ENCODE measurements at regions of chr3 and their contacts with region 1.

Region 1: GRCh38 chr3:32570421-32571191 is at the start of gene DYNC1LI1:
- DNase-seq: peak; percentile 81 to 96 (median 88)
- ATAC-seq: peak; percentile 98
- H3K4me3 ChIP-seq: peak within 1 kb of the TSS; percentile 68
- H3K4me3 Mint-ChIP-seq: peak within 1 kb of the TSS; percentile 84 to 96 (median 92)
- H3K27ac ChIP-seq: peak within 1 kb of the TSS; percentile 90
- H3K27ac Mint-ChIP-seq: peak within 1 kb of the TSS; percentile 71 to 93 (median 86)
- H3K4me1 ChIP-seq: peaks cover 5 to 17% of the 10 kb centered on the region in 2 donors
- H3K4me1 Mint-ChIP-seq: peaks cover 0 to 39% (median 31%) of the 10 kb centered on the region in 7 donors
- H3K27me3 ChIP-seq: no peaks in the 10 kb centered on the region
- H3K27me3 Mint-ChIP-seq: no peaks in the 10 kb centered on the region
- total RNA-seq, gene DYNC1LI1: 26.1 to 28.5 (median 27.5) TPM

Region 2: GRCh38 chr3:31918179-31919168 is 652.1 kb before region 1 on chr3:
- CTCF ChIA-PET with region 1: no interaction called
- POLR2A ChIA-PET with region 1: no interaction called
- intact Hi-C with region 1: loop called in 1 of 2 experiments (anchors 10 kb)
- DNase-seq: peak in 4 of 9 donors; percentile 3 to 34 (median 29)
- ATAC-seq: no peak
- H3K4me3 ChIP-seq: no peak overlapping the region
- H3K4me3 Mint-ChIP-seq: peak overlapping the region in 9 of 10 donors; percentile 14 to 85 (median 77)
- H3K27ac ChIP-seq: no peak overlapping the region
- H3K27ac Mint-ChIP-seq: peak overlapping the region in 8 of 9 donors; percentile 53 to 96 (median 78)
- H3K4me1 ChIP-seq: peaks cover 0 to 10% of the 10 kb centered on the region in 2 donors
- H3K4me1 Mint-ChIP-seq: peaks cover 3 to 46% (median 22%) of the 10 kb centered on the region in 7 donors
- H3K27me3 ChIP-seq: no peaks in the 10 kb centered on the region
- H3K27me3 Mint-ChIP-seq: no peaks in the 10 kb centered on the region

Region 3: DNA sequence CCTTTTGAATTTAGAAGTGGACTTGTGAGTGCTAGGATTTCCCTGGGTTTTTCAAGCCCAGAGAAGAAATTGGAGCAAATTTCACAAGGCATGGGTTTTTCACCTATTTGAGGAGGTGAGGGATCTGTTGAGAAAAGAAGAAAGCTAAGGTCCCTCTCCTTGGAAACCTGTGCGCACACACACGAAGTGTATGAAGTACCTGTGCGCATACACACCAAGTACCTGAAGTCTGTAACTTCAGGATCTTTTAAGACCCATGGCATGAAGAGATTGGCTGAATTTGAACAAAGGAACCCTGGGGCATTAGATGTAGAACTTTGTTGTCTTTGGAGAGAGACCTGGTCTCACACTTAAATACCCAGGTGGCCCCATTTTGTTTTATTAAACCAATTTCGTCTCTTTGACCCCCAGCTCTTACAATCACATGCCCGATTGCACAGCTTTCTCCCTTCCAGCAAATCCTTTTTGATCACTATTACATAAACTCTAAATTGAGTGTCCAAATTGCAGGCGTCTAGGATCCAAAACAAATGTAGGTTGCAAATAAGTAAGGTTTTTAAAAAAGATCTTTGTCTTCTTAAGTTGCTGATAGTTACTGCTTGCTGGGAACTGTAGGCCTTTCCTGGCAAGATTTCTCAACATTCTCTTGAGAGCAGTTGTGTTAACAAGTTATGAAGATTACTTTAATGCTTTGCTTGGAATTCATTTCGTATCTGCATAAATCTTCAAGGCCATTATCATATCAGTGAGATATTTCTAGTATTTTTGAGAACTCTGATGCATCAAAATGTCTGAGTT is 267.8 kb before region 1 on chr3:
- CTCF ChIA-PET with region 1: no interaction called
- POLR2A ChIA-PET with region 1: no interaction called
- intact Hi-C with region 1: loop called in 1 of 2 experiments (anchors 2 kb)
- DNase-seq: peak in 1 of 9 donors; percentile 12
- ATAC-seq: no peak
- H3K4me3 ChIP-seq: peak overlapping the region; percentile 8
- H3K4me3 Mint-ChIP-seq: peak overlapping the region; percentile 72 to 88 (median 80)
- H3K27ac ChIP-seq: peak overlapping the region; percentile 66
- H3K27ac Mint-ChIP-seq: peak overlapping the region; percentile 94 to 99 (median 96)
- H3K4me1 ChIP-seq: peaks cover 29 to 33% of the 10 kb centered on the region in 2 donors
- H3K4me1 Mint-ChIP-seq: peaks cover 27 to 79% (median 70%) of the 10 kb centered on the region in 7 donors
- H3K27me3 ChIP-seq: no peaks in the 10 kb centered on the region
- H3K27me3 Mint-ChIP-seq: no peaks in the 10 kb centered on the region

Region 4: DNA sequence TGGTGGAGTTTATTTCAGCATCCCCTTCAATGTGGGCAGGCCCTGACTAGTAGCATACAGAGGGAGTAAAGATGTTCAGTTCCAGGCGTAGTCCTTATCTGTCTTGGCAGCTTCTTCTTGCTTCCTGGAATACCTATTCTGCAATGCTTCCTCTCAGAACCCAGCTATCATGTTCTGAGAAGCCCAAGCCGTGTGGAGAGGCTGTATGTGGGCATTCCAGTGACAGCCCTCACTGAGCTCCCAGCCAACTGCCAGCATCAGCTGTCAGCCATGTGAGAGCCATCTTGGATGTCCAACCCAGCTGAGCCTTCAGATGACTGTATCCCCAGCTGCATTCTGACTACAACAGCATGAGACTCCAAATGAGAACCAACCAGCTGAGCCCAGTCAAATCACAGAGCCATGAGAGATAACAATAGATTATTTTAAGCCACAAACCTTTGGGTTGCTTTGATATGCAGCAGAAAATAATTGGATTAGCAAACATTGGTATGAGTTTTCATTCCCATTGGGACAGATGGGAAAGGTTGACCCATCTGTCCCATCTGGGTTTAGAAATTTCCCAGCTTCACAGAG is 187.4 kb before region 1 on chr3:
- CTCF ChIA-PET with region 1: no interaction called
- POLR2A ChIA-PET with region 1: no interaction called
- intact Hi-C with region 1: no loop called
- DNase-seq: no peak
- ATAC-seq: no peak
- H3K4me3 ChIP-seq: no peak overlapping the region
- H3K4me3 Mint-ChIP-seq: no peak overlapping the region
- H3K27ac ChIP-seq: no peak overlapping the region
- H3K27ac Mint-ChIP-seq: peak overlapping the region in 1 of 9 donors; percentile 28
- H3K4me1 ChIP-seq: peaks cover 0 to under 1% of the 10 kb centered on the region in 2 donors
- H3K4me1 Mint-ChIP-seq: peaks cover 0 to 10% (median 6%) of the 10 kb centered on the region in 7 donors
- H3K27me3 ChIP-seq: no peaks in the 10 kb centered on the region
- H3K27me3 Mint-ChIP-seq: peaks cover 0 to 5% (median 0%) of the 10 kb centered on the region in 5 donors

Region 5: DNA sequence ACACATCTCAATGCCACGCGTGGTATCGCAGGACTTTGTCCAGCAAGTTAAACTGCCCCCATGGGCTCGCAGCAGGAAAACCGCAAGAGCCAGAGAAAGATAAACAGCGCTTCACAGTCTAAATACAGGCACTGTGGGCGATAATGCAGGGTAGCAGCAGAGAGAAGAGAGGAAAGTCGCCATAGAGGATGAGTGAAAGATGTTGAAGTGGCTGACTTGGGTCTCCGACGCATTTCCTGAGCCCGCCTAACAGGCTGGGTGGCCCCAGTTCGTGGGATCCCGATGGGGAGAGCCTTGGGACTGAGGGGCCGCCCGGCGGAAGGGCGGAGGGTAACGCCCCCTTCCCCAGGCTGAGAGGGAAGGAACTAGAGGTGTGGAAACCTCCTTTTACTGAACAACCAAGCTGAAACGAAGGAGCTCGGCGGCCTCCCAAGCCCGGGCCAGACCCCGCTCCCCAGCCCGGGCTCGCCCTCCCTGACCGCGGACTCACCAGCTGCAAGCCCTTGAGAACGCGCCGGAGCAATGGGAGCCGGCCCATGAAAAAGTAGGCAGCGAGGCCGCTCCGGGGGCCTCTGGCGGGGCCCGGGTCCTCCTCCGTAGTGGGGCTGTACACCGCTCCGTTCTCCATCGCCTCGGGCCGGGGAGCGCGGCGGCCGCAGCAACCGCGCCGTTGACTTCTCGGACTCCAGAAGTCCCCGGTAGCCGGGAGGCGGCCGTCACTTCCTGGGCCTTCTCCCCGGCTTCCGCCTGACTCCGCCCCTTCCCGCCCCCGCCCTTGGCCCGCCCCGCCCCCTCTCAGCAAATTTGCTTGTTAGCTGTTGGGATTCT is 68.3 kb before region 1 on chr3 and contains the start of gene CMTM6:
- CTCF ChIA-PET with region 1: no interaction called
- POLR2A ChIA-PET with region 1: no interaction called
- intact Hi-C with region 1: loop called (anchors 1 kb)
- DNase-seq: peak; percentile 49 to 77 (median 70)
- ATAC-seq: peak; percentile 92
- H3K4me3 ChIP-seq: peak within 1 kb of the TSS; percentile 89
- H3K4me3 Mint-ChIP-seq: peak within 1 kb of the TSS; percentile 79 to 97 (median 93)
- H3K27ac ChIP-seq: peak within 1 kb of the TSS; percentile 98
- H3K27ac Mint-ChIP-seq: peak within 1 kb of the TSS; percentile 86 to 98 (median 90)
- H3K4me1 ChIP-seq: peaks cover 6 to 23% of the 10 kb centered on the region in 2 donors
- H3K4me1 Mint-ChIP-seq: peaks cover 28 to 48% (median 43%) of the 10 kb centered on the region in 7 donors
- H3K27me3 ChIP-seq: no peaks in the 10 kb centered on the region
- H3K27me3 Mint-ChIP-seq: peaks cover 0 to 4% (median 0%) of the 10 kb centered on the region in 5 donors
- total RNA-seq, gene CMTM6: 24.1 to 61.1 (median 38.1) TPM

Region 6: GRCh38 chr3:33096093-33096868 is 525.7 kb after region 1 on chr3:
- CTCF ChIA-PET with region 1: no interaction called
- POLR2A ChIA-PET with region 1: no interaction called
- intact Hi-C with region 1: loop called in 1 of 2 experiments (anchors 5 kb)
- DNase-seq: peak in 8 of 9 donors; percentile 23 to 52 (median 39)
- ATAC-seq: peak; percentile 71
- H3K4me3 ChIP-seq: peak overlapping the region; percentile 90
- H3K4me3 Mint-ChIP-seq: peak overlapping the region; percentile 90 to 98 (median 94)
- H3K27ac ChIP-seq: peak overlapping the region; percentile 71
- H3K27ac Mint-ChIP-seq: peak overlapping the region; percentile 66 to 87 (median 80)
- H3K4me1 ChIP-seq: peaks cover 0 to 17% of the 10 kb centered on the region in 2 donors
- H3K4me1 Mint-ChIP-seq: peaks cover 24 to 45% (median 37%) of the 10 kb centered on the region in 7 donors
- H3K27me3 ChIP-seq: no peaks in the 10 kb centered on the region
- H3K27me3 Mint-ChIP-seq: peaks cover 0 to 4% (median 0%) of the 10 kb centered on the region in 5 donors

Measured in naive thymus-derived CD4-positive, alpha-beta T cell (primary cell).